ENCODE measurements at regions of chr2 and their contacts with region 1.

Region 1: DNA sequence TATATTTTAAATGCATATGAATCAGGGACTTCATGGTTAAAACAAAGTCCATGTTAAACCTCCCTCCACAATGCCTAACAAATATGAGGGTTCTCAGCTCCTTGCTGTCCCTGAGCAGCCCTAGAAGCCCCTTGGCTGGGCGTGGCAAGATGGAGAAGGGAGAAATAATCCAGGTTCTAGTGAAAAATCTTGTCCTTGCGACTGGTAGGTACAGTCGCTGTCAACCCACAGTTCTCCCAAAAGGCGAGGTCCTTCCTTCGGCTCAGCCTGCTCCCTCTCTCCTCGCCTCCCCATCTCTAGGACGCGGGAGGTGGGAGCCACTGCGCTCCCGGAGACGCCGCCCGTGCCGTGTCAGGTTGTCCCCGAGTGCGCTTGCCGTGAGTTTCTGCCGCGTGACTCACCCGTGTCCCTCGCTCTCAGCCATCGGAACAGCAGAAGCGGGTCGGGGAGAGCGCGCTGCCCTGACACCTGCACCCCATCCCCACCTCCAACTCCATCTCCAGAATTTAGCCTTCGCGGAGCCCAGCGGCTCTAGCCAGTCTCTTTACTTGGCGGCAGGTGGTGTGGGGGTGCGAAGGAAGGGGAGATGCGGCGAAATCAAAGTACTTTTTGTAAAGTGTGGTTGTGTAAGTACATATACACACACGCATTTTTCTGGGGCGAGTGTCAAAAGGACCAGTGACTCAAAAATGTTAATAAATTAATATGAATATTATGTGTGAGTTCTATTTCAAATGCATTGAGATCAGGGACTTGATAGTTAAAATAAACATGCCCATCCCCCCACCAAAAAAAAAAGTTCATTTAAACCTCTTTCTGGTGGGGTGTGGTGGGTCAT is 65.1 kb upstream of the TMEM17 start:
- DNase-seq: peak; percentile 74 to 80
- H3K4me3 ChIP-seq: peak overlapping the region; percentile 48
- H3K4me3 Mint-ChIP-seq: peak overlapping the region; percentile 90
- H3K27ac Mint-ChIP-seq: peak overlapping the region; percentile 48
- H3K4me1 ChIP-seq: peaks cover 84% of the 10 kb centered on the region
- H3K4me1 Mint-ChIP-seq: peaks cover 63% of the 10 kb centered on the region
- H3K27me3 ChIP-seq: no peaks in the 10 kb centered on the region
- H3K27me3 Mint-ChIP-seq: no peaks in the 10 kb centered on the region
- CTCF ChIP-seq: no peak

Region 2: DNA sequence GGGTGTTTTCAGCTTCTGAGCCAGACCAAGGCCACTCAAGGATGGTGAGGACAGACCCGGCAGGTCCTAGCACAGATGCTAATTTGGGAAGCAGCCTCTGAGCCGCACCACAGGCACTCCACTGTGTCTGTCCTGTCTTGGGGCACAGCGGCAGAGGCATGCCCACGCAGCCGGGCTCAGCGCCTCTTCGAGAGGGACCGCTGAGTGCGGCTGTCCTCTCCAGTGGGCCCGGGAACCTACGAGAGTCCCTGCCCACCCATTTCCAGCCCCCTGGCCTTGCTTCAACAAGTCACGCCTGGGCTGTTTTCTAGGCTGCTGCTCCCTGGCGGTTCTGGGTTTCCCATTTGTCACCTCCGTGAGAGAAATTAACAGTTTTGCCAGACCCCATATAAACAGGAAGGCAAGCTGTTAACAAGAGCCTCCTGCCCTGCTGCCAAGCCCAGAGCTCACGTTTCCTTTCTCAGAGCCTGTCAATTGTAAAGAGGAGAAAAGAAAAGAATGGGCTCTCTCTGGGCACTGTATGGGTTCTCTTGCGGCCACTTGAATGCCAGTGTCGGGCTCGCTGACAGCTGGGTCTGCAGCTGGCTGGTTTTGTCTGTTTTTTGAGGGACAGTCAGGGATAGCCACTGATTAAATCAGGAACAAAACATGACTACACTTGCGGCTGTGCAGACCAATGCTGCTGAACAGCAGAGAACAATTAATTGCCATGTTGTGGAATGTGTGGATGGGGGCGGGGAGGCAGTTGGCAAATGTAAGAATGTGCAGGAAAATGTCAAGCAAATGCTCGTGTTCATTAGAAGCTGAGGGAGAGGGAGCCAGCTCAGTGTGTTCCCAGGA is 95.7 kb before region 1 on chr2:
- CTCF ChIA-PET with region 1: no interaction called
- POLR2A ChIA-PET with region 1: no interaction called
- intact Hi-C with region 1: loop called (anchors 5 kb)
- DNase-seq: no peak
- H3K4me3 ChIP-seq: no peak overlapping the region
- H3K4me3 Mint-ChIP-seq: no peak overlapping the region
- H3K27ac Mint-ChIP-seq: no peak overlapping the region
- H3K4me1 ChIP-seq: peaks cover 27% of the 10 kb centered on the region
- H3K4me1 Mint-ChIP-seq: peaks cover 33% of the 10 kb centered on the region
- H3K27me3 ChIP-seq: no peaks in the 10 kb centered on the region
- H3K27me3 Mint-ChIP-seq: no peaks in the 10 kb centered on the region
- CTCF ChIP-seq: no peak

Region 3: GRCh38 chr2:62526531-62527381 is 44.3 kb before region 1 on chr2:
- CTCF ChIA-PET with region 1: no interaction called
- POLR2A ChIA-PET with region 1: no interaction called
- intact Hi-C with region 1: no loop called
- DNase-seq: no peak
- H3K4me3 ChIP-seq: no peak overlapping the region
- H3K4me3 Mint-ChIP-seq: no peak overlapping the region
- H3K27ac Mint-ChIP-seq: no peak overlapping the region
- H3K4me1 ChIP-seq: 0 out of 2 replicates have a peak, but pooled peaks cover 5% of the 10 kb centered on the region
- H3K4me1 Mint-ChIP-seq: peaks cover 17% of the 10 kb centered on the region
- H3K27me3 ChIP-seq: no peaks in the 10 kb centered on the region
- H3K27me3 Mint-ChIP-seq: no peaks in the 10 kb centered on the region
- CTCF ChIP-seq: no peak

Region 4: DNA sequence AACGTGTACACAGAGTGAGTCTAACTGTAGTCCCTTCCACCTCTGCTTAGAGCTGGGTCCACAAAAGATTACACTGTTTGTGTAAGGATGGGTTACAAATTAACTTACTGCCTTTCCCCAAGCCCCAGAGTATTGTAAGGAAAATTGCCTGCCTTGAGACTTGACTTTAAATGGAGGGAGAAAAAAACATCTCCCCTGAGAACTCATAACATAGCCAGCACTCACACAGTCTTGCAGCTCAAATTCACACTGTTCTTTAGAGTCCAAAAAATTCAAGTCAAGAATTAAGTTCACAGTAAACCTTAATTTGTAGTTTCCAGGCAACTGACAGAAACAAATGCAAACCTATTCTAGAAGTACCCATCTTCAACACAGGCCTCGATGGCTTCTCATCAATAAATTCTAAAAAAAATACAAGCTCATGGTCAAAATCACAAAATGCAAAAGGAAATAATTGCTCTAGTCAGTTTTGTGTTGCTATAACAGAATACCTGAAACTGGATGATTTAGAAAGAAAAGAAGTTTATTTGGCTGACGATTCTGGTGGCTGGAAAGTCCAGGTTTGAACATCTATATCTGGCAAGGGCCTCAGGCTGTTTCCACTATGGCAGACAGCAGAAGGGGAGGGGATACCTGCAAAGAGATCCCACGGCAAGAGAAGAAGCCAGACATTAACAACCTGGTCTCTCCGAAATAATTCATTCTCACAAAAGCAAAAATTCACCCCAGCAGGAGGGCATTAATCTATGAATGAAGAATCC is 30.5 kb before region 1 on chr2:
- CTCF ChIA-PET with region 1: no interaction called
- POLR2A ChIA-PET with region 1: interaction called, 9 read pairs
- intact Hi-C with region 1: loop called (anchors 1 kb)
- DNase-seq: peak in 1 of 2 experiments; percentile 67
- H3K4me3 ChIP-seq: no peak overlapping the region
- H3K4me3 Mint-ChIP-seq: peak overlapping the region; percentile 9
- H3K27ac Mint-ChIP-seq: peak overlapping the region; percentile 78
- H3K4me1 ChIP-seq: peaks cover 60% of the 10 kb centered on the region
- H3K4me1 Mint-ChIP-seq: peaks cover 61% of the 10 kb centered on the region
- H3K27me3 ChIP-seq: no peaks in the 10 kb centered on the region
- H3K27me3 Mint-ChIP-seq: no peaks in the 10 kb centered on the region
- CTCF ChIP-seq: no peak

Region 5: DNA sequence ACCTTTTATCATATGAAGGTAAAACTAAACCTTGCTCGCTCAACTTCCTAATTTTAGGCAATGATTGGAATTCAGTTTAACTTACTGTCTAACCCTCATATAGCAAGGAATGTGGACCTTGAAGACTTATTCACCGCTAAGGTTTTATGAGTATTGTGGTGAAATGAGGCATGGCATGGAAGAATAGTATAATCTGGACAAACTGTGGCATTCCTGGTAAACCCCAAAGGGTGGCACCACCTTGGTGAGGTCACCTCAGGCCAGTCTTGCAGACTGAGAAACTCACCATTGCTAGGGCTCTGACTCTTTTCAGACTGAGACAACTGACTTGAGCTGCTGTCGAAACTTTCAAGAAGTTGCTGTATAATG is 83.3 kb after region 1 on chr2:
- CTCF ChIA-PET with region 1: interaction called, 3 read pairs
- POLR2A ChIA-PET with region 1: interaction called, 4 read pairs
- intact Hi-C with region 1: loop called (anchors 1 kb)
- DNase-seq: peak in 1 of 2 experiments; percentile 37
- H3K4me3 ChIP-seq: no peak overlapping the region
- H3K4me3 Mint-ChIP-seq: peak overlapping the region; percentile 47
- H3K27ac Mint-ChIP-seq: peak overlapping the region; percentile 81
- H3K4me1 ChIP-seq: peaks cover 24% of the 10 kb centered on the region
- H3K4me1 Mint-ChIP-seq: peaks cover 27% of the 10 kb centered on the region
- H3K27me3 ChIP-seq: no peaks in the 10 kb centered on the region
- H3K27me3 Mint-ChIP-seq: no peaks in the 10 kb centered on the region
- CTCF ChIP-seq: no peak

Region 6: GRCh38 chr2:62705007-62705829 is 134.1 kb after region 1 on chr2 and contains the start of gene EHBP1:
- CTCF ChIA-PET with region 1: interaction called, 3 read pairs
- POLR2A ChIA-PET with region 1: interaction called, 14 read pairs
- intact Hi-C with region 1: loop called (anchors 1 kb)
- DNase-seq: peak; percentile 100
- H3K4me3 ChIP-seq: peak within 1 kb of the TSS; percentile 86
- H3K4me3 Mint-ChIP-seq: peak within 1 kb of the TSS; percentile 91
- H3K27ac Mint-ChIP-seq: peak within 1 kb of the TSS; percentile 87
- H3K4me1 ChIP-seq: peaks cover 34% of the 10 kb centered on the region
- H3K4me1 Mint-ChIP-seq: peaks cover 29% of the 10 kb centered on the region
- H3K27me3 ChIP-seq: no peaks in the 10 kb centered on the region
- H3K27me3 Mint-ChIP-seq: no peaks in the 10 kb centered on the region
- CTCF ChIP-seq: no peak
- total RNA-seq, gene EHBP1: 120 and 123 TPM in 2 replicates

Region 7: DNA sequence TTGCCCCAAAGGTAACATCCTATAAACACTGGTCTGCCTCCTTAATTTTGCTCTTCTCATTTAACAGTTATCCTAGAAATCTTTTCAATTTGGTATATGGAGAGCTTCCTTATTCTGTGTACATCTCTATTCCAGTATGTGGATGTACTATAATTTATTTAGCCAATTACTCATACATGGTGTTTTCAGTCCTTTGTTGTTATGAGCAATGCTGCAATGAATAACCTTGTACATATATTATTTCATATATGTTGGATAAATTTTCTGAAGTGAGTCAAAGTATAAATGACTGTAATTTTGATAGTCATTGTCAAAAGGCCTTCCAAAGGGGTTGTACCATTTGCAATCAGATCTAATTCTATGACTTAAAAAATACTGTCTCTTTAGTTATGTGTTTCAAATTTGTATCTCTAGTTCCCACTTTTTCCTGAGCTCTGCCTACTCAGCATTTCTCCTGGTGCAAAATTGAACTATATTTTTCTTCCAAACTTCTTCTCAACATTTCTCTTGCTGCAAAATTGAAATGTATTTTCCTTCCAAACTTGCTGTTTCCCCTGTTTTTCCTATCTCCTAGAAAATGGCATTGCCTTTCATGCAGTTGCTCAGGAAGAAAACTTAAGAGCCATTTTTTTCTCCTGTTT is 326.2 kb after region 1 on chr2:
- CTCF ChIA-PET with region 1: no interaction called
- POLR2A ChIA-PET with region 1: no interaction called
- intact Hi-C with region 1: no loop called
- DNase-seq: no peak
- H3K4me3 ChIP-seq: no peak overlapping the region
- H3K4me3 Mint-ChIP-seq: no peak overlapping the region
- H3K27ac Mint-ChIP-seq: no peak overlapping the region
- H3K4me1 ChIP-seq: no peaks in the 10 kb centered on the region
- H3K4me1 Mint-ChIP-seq: no peaks in the 10 kb centered on the region
- H3K27me3 ChIP-seq: no peaks in the 10 kb centered on the region
- H3K27me3 Mint-ChIP-seq: no peaks in the 10 kb centered on the region
- CTCF ChIP-seq: no peak